Ascending aorta (tissue), 2 donors: ENCODE measurements at regions of chr4 and their contacts with region 1.

Region 1: DNA sequence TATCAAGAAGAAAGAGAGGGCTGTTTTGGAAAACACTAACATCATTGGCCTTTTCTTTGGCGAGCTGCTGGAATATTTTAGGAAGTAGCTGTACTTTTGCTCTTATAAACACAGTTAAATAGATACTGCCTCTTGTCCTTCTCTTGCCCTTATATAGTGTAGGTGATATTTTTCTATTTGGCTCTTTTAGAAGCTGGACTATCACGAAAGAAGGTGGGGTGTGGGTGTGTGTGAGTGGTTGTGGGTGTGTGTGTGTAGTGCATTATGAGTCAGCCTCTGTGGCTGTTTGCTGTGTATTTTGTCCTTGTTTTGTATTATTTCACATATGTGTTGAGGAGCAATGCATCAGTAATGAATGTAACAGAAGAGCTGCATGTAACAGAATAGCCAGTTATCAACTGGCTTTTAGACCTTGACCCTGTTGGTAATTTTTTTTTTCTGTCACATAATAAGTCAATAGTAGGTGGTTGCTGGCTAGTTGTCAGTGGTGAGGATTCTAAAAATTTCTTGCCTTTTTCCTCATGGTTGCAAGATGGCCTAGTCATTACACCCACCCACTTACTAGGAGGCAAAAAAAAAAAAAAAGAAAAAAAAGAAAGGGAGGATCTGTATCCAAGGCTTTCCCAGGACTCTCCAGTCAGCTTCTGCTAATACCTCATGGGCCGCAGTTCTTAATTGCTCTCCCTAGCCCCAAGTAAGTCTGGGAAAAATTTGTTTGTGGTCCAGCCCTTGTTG is 23.8 kb downstream of the ARHGAP10 start:
- DNase-seq: no peak
- H3K4me3 ChIP-seq: peak overlapping the region; percentile 14 to 55
- H3K27ac ChIP-seq: peak overlapping the region; percentile 76 to 83
- H3K4me1 ChIP-seq: peaks cover 7 to 51% of the 10 kb centered on the region in 2 donors
- H3K27me3 ChIP-seq: no peaks in the 10 kb centered on the region
- CTCF ChIP-seq: no peak

Region 2: DNA sequence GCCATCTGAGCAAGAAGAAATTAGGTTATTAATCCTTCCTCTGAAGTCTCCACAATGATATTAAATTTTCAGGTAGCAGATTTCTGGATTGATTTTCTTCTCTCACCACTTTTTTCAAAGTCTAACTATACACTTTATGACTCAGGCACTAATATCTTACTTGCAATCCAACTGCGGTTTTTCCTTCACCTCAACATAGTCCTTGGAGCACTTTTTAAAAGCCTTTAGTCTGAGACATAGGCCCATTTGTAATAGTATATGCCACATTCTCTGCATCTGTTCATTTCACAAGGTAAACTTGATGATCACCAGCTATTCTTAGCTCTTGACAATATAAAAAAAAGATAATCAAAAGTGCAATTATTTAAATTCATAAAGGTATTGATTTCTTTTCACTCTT is 330.7 kb before region 1 on chr4:
- intact Hi-C with region 1: no loop called
- DNase-seq: no peak
- H3K4me3 ChIP-seq: no peak overlapping the region
- H3K27ac ChIP-seq: no peak overlapping the region
- H3K4me1 ChIP-seq: no peaks in the 10 kb centered on the region
- H3K27me3 ChIP-seq: no peaks in the 10 kb centered on the region
- CTCF ChIP-seq: no peak

Region 3: GRCh38 chr4:147617173-147617840 is 138.4 kb before region 1 on chr4 and contains the start of gene TMEM184C:
- intact Hi-C with region 1: loop called (anchors 5 kb)
- DNase-seq: peak; percentile 96 to 99
- H3K4me3 ChIP-seq: peak within 1 kb of the TSS; percentile 82 to 91
- H3K27ac ChIP-seq: peak within 1 kb of the TSS; percentile 64 to 84
- H3K4me1 ChIP-seq: peaks cover 0 to 20% of the 10 kb centered on the region in 2 donors
- H3K27me3 ChIP-seq: no peaks in the 10 kb centered on the region
- CTCF ChIP-seq: peak in 1 of 3 experiments; percentile 6
- total RNA-seq, gene TMEM184C: 14.2 TPM